Aorta (tissue), 5 donors: ENCODE measurements at regions of chr7 and their contacts with region 1.

Region 1: DNA sequence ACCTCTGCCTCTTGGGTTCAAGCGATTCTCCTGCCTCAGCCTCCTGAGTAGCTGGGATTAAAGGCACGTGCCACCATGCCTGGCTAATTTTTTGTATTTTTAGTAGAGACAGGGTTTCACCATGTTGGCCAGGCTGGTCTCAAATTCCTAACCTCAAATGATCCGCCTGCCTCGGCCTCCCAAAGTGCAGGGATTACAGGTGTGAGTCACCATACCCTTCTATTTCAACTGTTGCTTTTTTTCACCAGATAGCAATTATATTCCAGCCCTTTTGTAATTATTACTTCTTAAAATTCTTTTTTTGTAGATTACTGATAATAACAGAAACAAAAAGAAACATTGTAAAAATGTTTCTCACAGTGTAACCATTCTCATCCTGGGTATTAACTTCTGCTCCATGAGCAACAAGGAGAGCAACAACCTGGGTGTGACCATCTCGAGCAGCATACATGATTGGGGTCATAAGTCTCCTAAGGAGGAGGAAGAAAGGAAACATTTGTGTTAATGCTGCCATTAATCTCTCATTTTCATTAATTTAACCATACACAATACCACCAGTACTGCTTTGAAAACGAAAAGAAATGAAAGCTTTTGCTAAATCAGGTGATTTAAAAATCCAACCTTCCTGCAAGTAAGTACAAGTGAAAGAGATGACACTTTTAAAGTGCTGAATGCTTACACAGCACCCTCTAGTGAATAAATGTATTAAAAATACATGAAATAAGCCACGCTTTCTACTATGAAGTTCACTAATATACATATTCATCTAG is 41.8 kb downstream of the ASZ1 start:
- DNase-seq: no peak
- ATAC-seq: no peak
- H3K4me3 ChIP-seq: no peak overlapping the region
- H3K27ac ChIP-seq: no peak overlapping the region
- H3K4me1 ChIP-seq: no peaks in the 10 kb centered on the region
- H3K27me3 ChIP-seq: no peaks in the 10 kb centered on the region

Region 2: GRCh38 chr7:116984917-116985316 is 400.6 kb before region 1 on chr7:
- intact Hi-C with region 1: loop called in 1 of 2 experiments (anchors 10 kb)
- DNase-seq: no peak
- ATAC-seq: no peak
- H3K4me3 ChIP-seq: no peak overlapping the region
- H3K27ac ChIP-seq: no peak overlapping the region
- H3K4me1 ChIP-seq: no peaks in the 10 kb centered on the region
- H3K27me3 ChIP-seq: no peaks in the 10 kb centered on the region

Region 3: DNA sequence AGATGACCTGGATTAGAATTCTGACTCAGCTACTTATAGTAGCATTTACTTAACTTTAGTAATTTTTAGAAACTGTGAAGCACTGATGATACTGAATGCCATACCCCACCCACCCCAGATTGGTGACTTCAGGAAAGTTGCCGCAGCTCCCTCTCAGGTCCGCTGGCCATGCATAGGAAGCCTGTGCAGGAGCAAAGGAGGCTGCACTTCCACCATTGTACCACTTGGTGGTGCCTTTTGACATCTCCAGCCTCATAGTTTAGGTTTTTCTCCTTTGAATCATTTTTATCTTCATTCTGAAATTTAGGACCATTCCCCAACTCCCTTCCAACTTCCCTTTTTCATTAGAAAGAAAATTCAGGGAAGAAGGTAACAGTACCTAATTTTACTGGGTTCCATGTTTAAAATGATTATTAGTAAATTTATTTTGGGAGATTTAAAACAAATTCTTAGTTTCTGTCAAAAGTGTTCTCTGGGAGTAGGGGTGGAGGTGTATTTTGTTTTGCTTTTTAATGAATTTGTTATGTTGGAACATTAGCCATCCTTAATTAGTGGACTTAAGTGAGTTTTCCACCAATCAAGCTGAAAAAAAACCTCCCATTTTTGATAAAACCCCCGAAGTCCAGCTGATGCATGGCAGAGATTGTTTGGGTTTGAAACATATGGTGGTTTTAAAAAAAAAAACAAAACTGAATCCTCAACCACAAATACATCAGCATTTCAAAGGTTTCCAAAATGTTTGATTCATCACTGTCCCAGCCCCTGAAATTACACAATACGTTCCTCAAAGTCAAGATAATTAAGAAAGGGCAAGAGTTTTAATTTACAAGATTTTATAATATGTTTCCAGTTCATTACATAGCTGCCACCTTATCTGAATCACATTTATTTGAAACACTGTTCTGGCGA is 172.3 kb before region 1 on chr7:
- intact Hi-C with region 1: loop called (anchors 5 kb)
- DNase-seq: no peak
- ATAC-seq: peak; percentile 80
- H3K4me3 ChIP-seq: no peak overlapping the region
- H3K27ac ChIP-seq: no peak overlapping the region
- H3K4me1 ChIP-seq: no peaks in the 10 kb centered on the region
- H3K27me3 ChIP-seq: no peaks in the 10 kb centered on the region

Region 4: DNA sequence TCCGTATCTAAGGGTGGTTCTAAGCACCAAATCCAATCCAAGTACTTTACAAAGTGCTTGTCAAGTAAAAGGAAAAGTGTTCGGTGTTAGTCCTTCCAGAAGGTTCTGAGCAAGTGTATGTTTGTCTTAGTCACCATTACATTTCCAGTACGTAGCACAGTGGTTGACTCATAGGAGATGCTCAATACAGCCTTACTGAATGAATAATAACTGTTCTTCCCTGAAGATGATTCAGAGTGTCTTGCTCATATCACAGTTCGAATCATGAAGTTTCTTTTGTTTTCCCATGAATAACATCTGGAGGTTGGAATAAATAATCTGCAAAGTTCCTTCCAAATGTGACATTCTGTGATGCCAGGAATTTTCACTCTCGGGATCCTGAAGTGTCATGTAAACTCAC is 116.1 kb before region 1 on chr7:
- intact Hi-C with region 1: no loop called
- DNase-seq: no peak
- ATAC-seq: no peak
- H3K4me3 ChIP-seq: no peak overlapping the region
- H3K27ac ChIP-seq: no peak overlapping the region
- H3K4me1 ChIP-seq: no peaks in the 10 kb centered on the region
- H3K27me3 ChIP-seq: no peaks in the 10 kb centered on the region